ENCODE measurements at regions of chr18 and their contacts with region 1.

Region 1: GRCh38 chr18:54946149-54946581 is 13.1 kb downstream of the CCDC68 start:
- DNase-seq: peak; percentile 85
- H3K4me3 Mint-ChIP-seq: peak overlapping the region; percentile 62
- H3K27ac Mint-ChIP-seq: peak overlapping the region; percentile 93
- H3K4me1 Mint-ChIP-seq: peaks cover 54% of the 10 kb centered on the region
- H3K27me3 Mint-ChIP-seq: no peaks in the 10 kb centered on the region
- CTCF ChIP-seq: no peak

Region 2: DNA sequence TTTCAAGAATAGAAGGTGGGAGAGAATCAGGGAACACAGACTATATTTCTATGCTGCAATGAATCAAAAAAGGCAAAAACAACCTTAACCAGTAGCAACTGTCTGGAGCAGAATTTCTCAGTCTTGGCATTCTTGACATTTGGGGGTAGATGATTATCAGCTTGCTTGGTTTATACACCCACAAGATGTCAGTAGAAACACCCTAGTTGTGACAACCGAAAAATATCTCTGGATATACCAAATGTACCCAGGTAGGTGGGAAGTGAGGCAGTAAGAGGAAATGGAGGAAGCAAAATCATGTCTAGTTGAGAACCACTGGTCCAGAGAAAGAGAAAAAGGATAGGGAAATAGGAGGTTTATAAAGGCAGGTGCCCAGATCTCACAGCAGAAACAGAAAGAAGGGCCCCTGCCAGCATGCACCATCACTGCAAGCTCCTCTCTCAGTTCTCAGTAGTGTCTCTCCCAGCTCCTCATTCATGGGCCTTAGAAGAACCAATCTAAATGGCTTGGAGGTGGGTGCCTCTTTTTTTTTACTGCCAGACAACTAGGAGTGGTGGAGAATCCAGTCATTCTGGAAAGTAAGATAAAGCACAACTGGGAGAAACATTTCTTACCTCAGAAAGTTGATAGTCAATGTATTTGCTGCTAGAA is 772.1 kb before region 1 on chr18:
- CTCF ChIA-PET with region 1: no interaction called
- intact Hi-C with region 1: no loop called
- DNase-seq: no peak
- H3K4me3 Mint-ChIP-seq: no peak overlapping the region
- H3K27ac Mint-ChIP-seq: no peak overlapping the region
- H3K4me1 Mint-ChIP-seq: peaks cover 25% of the 10 kb centered on the region
- H3K27me3 Mint-ChIP-seq: no peaks in the 10 kb centered on the region
- CTCF ChIP-seq: no peak

Region 3: GRCh38 chr18:54679318-54680149 is 266.6 kb before region 1 on chr18:
- CTCF ChIA-PET with region 1: interaction called, 17 read pairs
- intact Hi-C with region 1: loop called (anchors 1 kb)
- DNase-seq: peak; percentile 46
- H3K4me3 Mint-ChIP-seq: no peak overlapping the region
- H3K27ac Mint-ChIP-seq: peak overlapping the region; percentile 14
- H3K4me1 Mint-ChIP-seq: peaks cover 31% of the 10 kb centered on the region
- H3K27me3 Mint-ChIP-seq: no peaks in the 10 kb centered on the region
- CTCF ChIP-seq: peak; percentile 25

Region 4: DNA sequence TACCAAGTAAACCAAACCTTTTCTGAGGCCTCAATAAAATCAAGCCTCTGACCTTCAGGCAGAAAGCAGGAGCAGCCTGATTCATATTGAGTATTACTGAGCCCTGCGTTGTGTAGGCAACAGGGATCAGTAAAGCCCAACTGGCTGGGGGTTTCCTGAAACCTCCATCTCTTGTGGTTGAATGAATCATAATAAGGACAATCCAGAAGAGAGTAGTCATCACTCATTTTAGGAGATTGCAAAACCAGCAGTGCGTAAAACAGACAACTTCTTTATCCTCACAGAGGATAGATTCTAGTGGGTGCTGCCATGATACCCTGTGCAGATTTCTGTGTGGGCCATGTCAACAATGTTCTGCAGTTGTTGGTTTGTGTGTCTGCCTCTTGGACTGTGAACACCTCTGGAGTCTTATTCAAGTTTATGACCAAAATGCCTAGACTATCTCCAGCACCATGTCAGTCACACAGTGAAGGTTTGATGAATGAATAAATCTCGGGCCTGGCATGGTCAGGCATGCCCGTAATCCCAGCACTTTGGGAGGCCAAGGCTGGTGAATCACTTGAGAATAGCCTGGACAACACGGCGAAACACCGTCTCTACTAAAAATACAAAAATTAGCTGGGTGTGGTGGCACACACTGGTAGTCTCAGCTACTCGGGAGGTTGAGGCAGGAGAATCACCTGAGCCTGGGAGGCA is 169.7 kb before region 1 on chr18:
- CTCF ChIA-PET with region 1: no interaction called
- intact Hi-C with region 1: loop called (anchors 2 kb)
- DNase-seq: peak; percentile 81
- H3K4me3 Mint-ChIP-seq: peak overlapping the region; percentile 1
- H3K27ac Mint-ChIP-seq: peak overlapping the region; percentile 84
- H3K4me1 Mint-ChIP-seq: peaks cover 67% of the 10 kb centered on the region
- H3K27me3 Mint-ChIP-seq: no peaks in the 10 kb centered on the region
- CTCF ChIP-seq: no peak

Region 5: GRCh38 chr18:54859667-54860421 is 86.3 kb before region 1 on chr18:
- CTCF ChIA-PET with region 1: interaction called, 3 read pairs
- intact Hi-C with region 1: loop called (anchors 5 kb)
- DNase-seq: no peak
- H3K4me3 Mint-ChIP-seq: peak overlapping the region; percentile 64
- H3K27ac Mint-ChIP-seq: peak overlapping the region; percentile 91
- H3K4me1 Mint-ChIP-seq: peaks cover 59% of the 10 kb centered on the region
- H3K27me3 Mint-ChIP-seq: no peaks in the 10 kb centered on the region
- CTCF ChIP-seq: no peak

Region 6: DNA sequence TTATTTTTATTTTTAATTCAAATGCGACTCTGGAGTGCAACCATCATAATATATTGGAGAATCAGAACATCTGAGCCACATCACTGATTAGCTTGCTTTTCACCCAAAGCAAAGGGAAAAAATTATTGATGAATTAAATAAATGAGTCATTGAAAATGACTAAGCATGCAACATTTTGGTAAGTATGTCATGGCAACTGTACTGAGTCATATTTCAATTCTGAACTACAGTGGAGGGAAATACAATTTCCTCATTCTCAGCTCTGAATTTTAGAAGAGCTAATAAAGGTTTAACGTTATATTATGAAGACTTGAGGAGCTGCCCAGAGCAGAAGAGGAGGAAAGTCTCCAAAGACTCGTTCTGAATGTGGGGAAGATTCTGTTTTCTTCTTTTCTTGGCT is 102.7 kb after region 1 on chr18:
- CTCF ChIA-PET with region 1: no interaction called
- intact Hi-C with region 1: no loop called
- DNase-seq: no peak
- H3K4me3 Mint-ChIP-seq: no peak overlapping the region
- H3K27ac Mint-ChIP-seq: peak overlapping the region; percentile 97
- H3K4me1 Mint-ChIP-seq: peaks cover 26% of the 10 kb centered on the region
- H3K27me3 Mint-ChIP-seq: no peaks in the 10 kb centered on the region
- CTCF ChIP-seq: no peak